PC-9 (cell line): ENCODE measurements at regions of chr12 and their contacts with region 1.

Region 1: DNA sequence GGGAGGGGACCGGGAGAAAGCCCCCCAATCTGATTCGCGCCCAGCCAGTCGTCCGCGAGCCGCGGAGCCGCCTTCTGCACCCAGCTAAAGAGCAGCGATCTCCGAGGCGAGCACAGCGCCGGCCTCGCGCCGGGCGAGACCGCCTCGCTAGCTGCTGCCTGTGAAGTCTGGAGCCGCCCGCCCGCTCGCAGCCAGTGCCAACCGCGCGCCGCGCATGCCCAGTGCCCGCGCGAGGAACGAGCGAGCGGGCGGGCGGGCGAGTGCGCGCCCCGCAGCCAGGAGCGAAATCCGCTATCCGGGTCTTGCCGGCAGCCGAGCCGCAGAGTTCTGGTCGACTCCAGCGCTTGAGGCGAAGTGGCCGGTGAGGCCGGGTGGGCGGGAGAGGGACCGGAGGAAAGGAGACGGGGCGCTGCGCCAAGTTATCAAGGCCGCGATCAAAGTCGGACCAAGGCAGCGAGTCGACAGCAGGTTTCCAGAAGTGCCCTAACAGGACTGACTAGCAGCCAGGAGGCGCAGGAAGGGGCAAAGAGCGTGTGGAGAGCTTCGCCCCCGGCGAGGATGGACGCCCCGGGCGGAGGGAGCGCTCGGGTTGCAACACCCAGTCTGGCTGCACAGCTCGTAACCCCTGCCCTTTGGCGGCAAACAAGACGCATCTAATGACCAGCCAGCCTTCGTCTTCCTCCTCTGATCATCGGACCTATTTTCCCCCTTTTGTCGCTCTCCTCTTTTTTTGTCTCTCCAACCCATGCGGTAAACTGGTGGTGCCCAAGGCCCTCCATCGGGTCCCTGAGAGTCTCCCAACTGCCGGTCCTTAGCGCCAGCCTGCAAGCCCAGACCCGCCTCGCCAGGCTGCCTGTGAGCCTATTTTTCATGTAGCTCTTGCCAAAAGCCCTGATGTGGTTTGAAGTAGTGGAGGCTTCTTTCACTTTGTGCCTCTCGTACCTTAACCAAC is at the start of gene EPS8:
- DNase-seq: peak; percentile 90 to 100
- H3K4me3 ChIP-seq: peak within 1 kb of the TSS; percentile 64
- H3K27ac ChIP-seq: peak within 1 kb of the TSS; percentile 79
- H3K4me1 ChIP-seq: peaks cover 37% of the 10 kb centered on the region
- H3K27me3 ChIP-seq: no peaks in the 10 kb centered on the region
- CTCF ChIP-seq: no peak
- total RNA-seq, gene EPS8: 224 and 232 TPM in 2 replicates

Region 2: DNA sequence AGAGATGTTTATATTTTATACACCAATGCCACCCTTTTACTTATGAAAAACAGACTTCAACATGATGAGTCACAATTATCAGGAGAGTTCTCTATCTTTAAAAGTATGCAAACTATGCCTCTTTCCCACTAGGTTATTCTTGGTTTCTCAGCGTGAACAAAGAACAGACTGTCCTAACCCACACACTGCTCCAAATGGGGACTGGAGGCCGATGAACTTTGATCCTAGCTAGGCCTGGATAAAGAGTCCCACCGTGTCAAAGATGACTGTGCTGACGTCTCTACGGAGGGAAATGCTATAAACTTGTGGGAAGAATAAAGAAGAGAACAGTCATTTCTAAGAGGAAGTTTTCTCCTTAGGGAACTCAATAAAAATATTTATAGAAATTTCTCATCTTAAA is 160.4 kb before region 1 on chr12:
- CTCF ChIA-PET with region 1: no interaction called
- POLR2A ChIA-PET with region 1: interaction called, 9 read pairs
- intact Hi-C with region 1: loop called (anchors 1 kb)
- DNase-seq: peak; percentile 79 to 95
- H3K4me3 ChIP-seq: no peak overlapping the region
- H3K27ac ChIP-seq: peak overlapping the region; percentile 96
- H3K4me1 ChIP-seq: peaks cover 31% of the 10 kb centered on the region
- H3K27me3 ChIP-seq: no peaks in the 10 kb centered on the region
- CTCF ChIP-seq: no peak

Region 3: GRCh38 chr12:15682826-15683225 is 106.7 kb before region 1 on chr12:
- CTCF ChIA-PET with region 1: no interaction called
- POLR2A ChIA-PET with region 1: no interaction called
- intact Hi-C with region 1: loop called (anchors 2 kb)
- DNase-seq: peak in 1 of 2 experiments; percentile 63
- H3K4me3 ChIP-seq: no peak overlapping the region
- H3K27ac ChIP-seq: peak overlapping the region; percentile 31; the same call in 1 of the 2 replicates
- H3K4me1 ChIP-seq: peaks cover 22% of the 10 kb centered on the region
- H3K27me3 ChIP-seq: no peaks in the 10 kb centered on the region
- CTCF ChIP-seq: no peak

Region 4: DNA sequence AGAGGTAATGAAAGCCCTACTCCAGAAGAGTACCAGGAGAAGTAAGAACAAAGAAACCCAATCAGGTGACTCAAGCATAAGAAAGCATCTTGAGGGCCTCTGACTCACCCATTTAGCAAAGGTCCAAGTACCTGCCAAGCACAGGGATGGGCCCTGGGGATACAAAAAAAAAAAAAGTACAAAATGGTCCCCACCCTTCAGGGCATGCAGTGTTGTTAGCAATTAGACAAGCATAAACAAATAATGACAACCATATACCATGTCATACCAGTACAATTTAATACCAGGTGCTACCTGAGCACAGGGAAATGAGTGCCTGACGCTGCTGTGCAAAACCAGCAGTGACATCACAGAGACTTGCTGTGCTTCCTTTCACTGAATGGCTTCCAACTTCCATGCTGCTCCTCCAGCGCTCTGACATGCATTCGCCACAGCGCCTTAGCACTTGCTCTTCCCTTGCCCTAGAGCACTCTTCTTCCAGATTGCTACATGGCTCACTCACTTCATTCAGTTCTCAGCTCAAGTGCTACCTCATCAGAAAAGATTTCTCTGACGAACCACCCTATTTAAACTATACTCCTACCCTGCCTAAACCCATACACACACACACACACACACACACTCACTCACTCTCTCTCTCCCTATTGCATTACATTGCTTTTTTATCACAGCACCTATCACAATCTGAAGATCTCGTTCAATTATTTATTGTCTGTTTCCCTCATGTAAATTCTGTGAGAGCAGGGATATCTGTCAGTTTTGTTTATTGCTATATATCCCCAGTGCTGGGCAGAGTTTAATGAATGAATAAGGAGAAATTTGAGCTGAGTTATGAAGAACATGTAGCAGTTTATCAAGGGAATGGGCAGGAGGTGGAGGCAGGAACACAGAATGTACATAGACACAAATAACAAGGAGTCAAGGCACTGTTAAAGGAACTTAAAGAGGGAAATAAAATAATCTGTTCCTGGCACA is 12.6 kb after region 1 on chr12:
- CTCF ChIA-PET with region 1: interaction called, 15 read pairs
- POLR2A ChIA-PET with region 1: no interaction called
- intact Hi-C with region 1: loop called (anchors 1 kb)
- DNase-seq: peak; percentile 77 to 93
- H3K4me3 ChIP-seq: no peak overlapping the region
- H3K27ac ChIP-seq: peak overlapping the region; percentile 44
- H3K4me1 ChIP-seq: peaks cover 61% of the 10 kb centered on the region
- H3K27me3 ChIP-seq: no peaks in the 10 kb centered on the region
- CTCF ChIP-seq: no peak

Region 5: GRCh38 chr12:15856097-15856982 is 66.8 kb after region 1 on chr12:
- CTCF ChIA-PET with region 1: no interaction called
- POLR2A ChIA-PET with region 1: interaction called, 3 read pairs
- intact Hi-C with region 1: loop called (anchors 1 kb)
- DNase-seq: peak; percentile 63 to 65
- H3K4me3 ChIP-seq: peak overlapping the region; percentile 18; the same call in 1 of the 2 replicates
- H3K27ac ChIP-seq: peak overlapping the region; percentile 84
- H3K4me1 ChIP-seq: peaks cover 26% of the 10 kb centered on the region
- H3K27me3 ChIP-seq: no peaks in the 10 kb centered on the region
- CTCF ChIP-seq: peak; percentile 89